ENCODE measurements at regions of chr3 and their contacts with region 1.

Region 1: GRCh38 chr3:25441234-25441856 is 13.3 kb downstream of the RARB start:
- DNase-seq: no peak
- H3K4me3 ChIP-seq: no peak overlapping the region
- CTCF ChIP-seq: peak; percentile 57

Region 2: GRCh38 chr3:25171118-25171807 is 270.1 kb before region 1 on chr3:
- CTCF ChIA-PET with region 1: no interaction called
- POLR2A ChIA-PET with region 1: no interaction called
- DNase-seq: no peak
- H3K4me3 ChIP-seq: no peak overlapping the region
- CTCF ChIP-seq: no peak

Region 3: DNA sequence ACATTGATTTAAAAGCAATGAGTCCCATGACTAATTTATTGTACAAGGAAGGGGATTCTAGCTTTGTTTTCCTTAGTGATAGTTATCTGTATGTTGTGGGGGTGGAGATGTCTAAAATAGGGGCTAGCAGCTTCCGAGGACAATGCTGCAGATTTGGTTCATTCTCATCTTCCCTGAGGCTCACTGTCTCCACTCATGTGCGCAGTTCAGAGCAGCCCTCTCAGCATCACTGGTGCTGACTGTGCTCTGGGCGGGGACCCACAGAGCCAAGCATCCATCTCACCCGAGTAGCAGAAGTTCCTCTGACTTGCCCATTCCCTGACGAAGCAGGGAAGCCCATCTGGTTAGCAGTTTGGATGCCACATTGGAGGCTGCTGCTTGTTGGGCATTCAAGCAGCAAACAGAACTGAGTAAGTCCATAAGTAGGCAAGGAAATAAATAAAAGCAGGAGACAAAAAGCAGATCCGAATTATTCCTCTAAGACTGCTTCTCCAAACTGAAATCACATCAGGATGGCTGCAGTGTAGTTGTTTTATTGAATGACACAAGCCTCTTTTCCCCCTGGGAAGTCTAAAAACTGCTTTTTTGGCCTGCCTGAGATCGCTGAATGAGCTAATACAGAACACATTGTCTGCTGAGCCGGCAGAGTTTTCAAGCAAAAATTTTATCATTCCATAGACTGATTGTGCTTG is 14.2 kb after region 1 on chr3:
- CTCF ChIA-PET with region 1: interaction called, 10 read pairs
- POLR2A ChIA-PET with region 1: no interaction called
- DNase-seq: no peak
- H3K4me3 ChIP-seq: peak overlapping the region; percentile 12
- CTCF ChIP-seq: no peak